ENCODE measurements at regions of chr3 and their contacts with region 1.

Region 1: GRCh38 chr3:172580680-172581401 is 57.6 kb upstream of the TNFSF10 start:
- DNase-seq: no peak
- H3K4me3 Mint-ChIP-seq: peak overlapping the region; percentile 22
- H3K27ac Mint-ChIP-seq: peak overlapping the region; percentile 85
- H3K4me1 Mint-ChIP-seq: peaks cover 85% of the 10 kb centered on the region
- H3K27me3 Mint-ChIP-seq: no peaks in the 10 kb centered on the region

Region 2: GRCh38 chr3:172511783-172512762 is 68.8 kb before region 1 on chr3:
- CTCF ChIA-PET with region 1: interaction called, 6 read pairs
- intact Hi-C with region 1: loop called (anchors 1 kb)
- DNase-seq: peak; percentile 92
- H3K4me3 Mint-ChIP-seq: peak overlapping the region; percentile 68
- H3K27ac Mint-ChIP-seq: peak overlapping the region; percentile 93
- H3K4me1 Mint-ChIP-seq: peaks cover 82% of the 10 kb centered on the region
- H3K27me3 Mint-ChIP-seq: no peaks in the 10 kb centered on the region

Region 3: DNA sequence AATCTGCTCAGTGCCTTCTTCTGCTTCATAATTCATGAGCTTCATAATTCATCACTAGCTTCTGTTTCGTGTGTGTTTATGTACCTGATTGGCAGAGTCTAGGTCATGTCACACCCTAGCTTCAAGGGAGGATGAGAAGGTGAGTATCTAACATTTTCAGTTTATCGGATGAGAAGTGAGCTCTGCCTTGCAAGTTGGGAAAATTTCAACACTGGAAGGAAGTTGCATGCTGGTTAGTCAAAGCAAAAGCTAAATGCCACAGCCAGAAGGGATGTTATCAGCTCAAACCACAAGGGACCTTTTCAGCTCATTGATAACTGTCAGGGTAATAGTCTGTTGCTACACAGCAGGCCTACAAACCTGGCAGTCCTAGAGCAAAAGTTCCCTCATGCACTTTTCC is 50.3 kb before region 1 on chr3:
- CTCF ChIA-PET with region 1: interaction called, 8 read pairs
- intact Hi-C with region 1: loop called (anchors 1 kb)
- DNase-seq: peak; percentile 59
- H3K4me3 Mint-ChIP-seq: peak overlapping the region; percentile 22
- H3K27ac Mint-ChIP-seq: peak overlapping the region; percentile 75
- H3K4me1 Mint-ChIP-seq: peaks cover 22% of the 10 kb centered on the region
- H3K27me3 Mint-ChIP-seq: no peaks in the 10 kb centered on the region

Region 4: GRCh38 chr3:172562871-172563863 is 17.7 kb before region 1 on chr3:
- CTCF ChIA-PET with region 1: interaction called, 13 read pairs
- intact Hi-C with region 1: loop called (anchors 1 kb)
- DNase-seq: peak; percentile 71
- H3K4me3 Mint-ChIP-seq: peak overlapping the region; percentile 11
- H3K27ac Mint-ChIP-seq: peak overlapping the region; percentile 82
- H3K4me1 Mint-ChIP-seq: peaks cover 37% of the 10 kb centered on the region
- H3K27me3 Mint-ChIP-seq: no peaks in the 10 kb centered on the region

Region 5: GRCh38 chr3:172710664-172711453 is 130.0 kb after region 1 on chr3 and contains the start of gene NCEH1:
- CTCF ChIA-PET with region 1: no interaction called
- intact Hi-C with region 1: no loop called
- DNase-seq: peak; percentile 85
- H3K4me3 Mint-ChIP-seq: peak within 1 kb of the TSS; percentile 91
- H3K27ac Mint-ChIP-seq: no peak within 1 kb of the TSS
- H3K4me1 Mint-ChIP-seq: peaks cover 11% of the 10 kb centered on the region
- H3K27me3 Mint-ChIP-seq: no peaks in the 10 kb centered on the region
- total RNA-seq, gene NCEH1: 2.9 to 3.5 TPM